Right cardiac atrium (tissue), 5 donors: ENCODE measurements at regions of chr20 and their contacts with region 1.

Region 1: GRCh38 chr20:40233406-40233805 is 455.6 kb downstream of the MAFB start:
- DNase-seq: no peak
- ATAC-seq: no peak
- H3K4me3 ChIP-seq: no peak overlapping the region
- H3K27ac ChIP-seq: no peak overlapping the region
- H3K4me1 ChIP-seq: no peaks in the 10 kb centered on the region
- H3K27me3 ChIP-seq: peaks cover 3% of the 10 kb centered on the region

Region 2: GRCh38 chr20:39165099-39165498 is 1068.3 kb before region 1 on chr20:
- intact Hi-C with region 1: no loop called
- DNase-seq: no peak
- ATAC-seq: peak in 1 of 2 donors; percentile 14
- H3K4me3 ChIP-seq: no peak overlapping the region
- H3K27ac ChIP-seq: peak overlapping the region; percentile 17
- H3K4me1 ChIP-seq: no peaks in the 10 kb centered on the region
- H3K27me3 ChIP-seq: no peaks in the 10 kb centered on the region

Region 3: GRCh38 chr20:40197691-40198090 is 35.7 kb before region 1 on chr20:
- intact Hi-C with region 1: no loop called
- DNase-seq: peak in 1 of 3 donors; percentile 10
- ATAC-seq: peak; percentile 60 to 92
- H3K4me3 ChIP-seq: no peak overlapping the region
- H3K27ac ChIP-seq: peak overlapping the region; percentile 26
- H3K4me1 ChIP-seq: peaks cover 2% of the 10 kb centered on the region
- H3K27me3 ChIP-seq: no peaks in the 10 kb centered on the region

Region 4: GRCh38 chr20:40397483-40397882 is 164.1 kb after region 1 on chr20:
- intact Hi-C with region 1: loop called in 1 of 4 experiments (anchors 10 kb)
- DNase-seq: no peak
- ATAC-seq: peak in 1 of 2 donors; percentile 38
- H3K4me3 ChIP-seq: no peak overlapping the region
- H3K27ac ChIP-seq: no peak overlapping the region
- H3K4me1 ChIP-seq: no peaks in the 10 kb centered on the region
- H3K27me3 ChIP-seq: no peaks in the 10 kb centered on the region